Activated CD8-positive, alpha-beta T cell treated with anti-CD3 and anti-CD28 coated beads for 36 hours (primary cell): ENCODE measurements at regions of chr17 and their contacts with region 1.

Region 1: DNA sequence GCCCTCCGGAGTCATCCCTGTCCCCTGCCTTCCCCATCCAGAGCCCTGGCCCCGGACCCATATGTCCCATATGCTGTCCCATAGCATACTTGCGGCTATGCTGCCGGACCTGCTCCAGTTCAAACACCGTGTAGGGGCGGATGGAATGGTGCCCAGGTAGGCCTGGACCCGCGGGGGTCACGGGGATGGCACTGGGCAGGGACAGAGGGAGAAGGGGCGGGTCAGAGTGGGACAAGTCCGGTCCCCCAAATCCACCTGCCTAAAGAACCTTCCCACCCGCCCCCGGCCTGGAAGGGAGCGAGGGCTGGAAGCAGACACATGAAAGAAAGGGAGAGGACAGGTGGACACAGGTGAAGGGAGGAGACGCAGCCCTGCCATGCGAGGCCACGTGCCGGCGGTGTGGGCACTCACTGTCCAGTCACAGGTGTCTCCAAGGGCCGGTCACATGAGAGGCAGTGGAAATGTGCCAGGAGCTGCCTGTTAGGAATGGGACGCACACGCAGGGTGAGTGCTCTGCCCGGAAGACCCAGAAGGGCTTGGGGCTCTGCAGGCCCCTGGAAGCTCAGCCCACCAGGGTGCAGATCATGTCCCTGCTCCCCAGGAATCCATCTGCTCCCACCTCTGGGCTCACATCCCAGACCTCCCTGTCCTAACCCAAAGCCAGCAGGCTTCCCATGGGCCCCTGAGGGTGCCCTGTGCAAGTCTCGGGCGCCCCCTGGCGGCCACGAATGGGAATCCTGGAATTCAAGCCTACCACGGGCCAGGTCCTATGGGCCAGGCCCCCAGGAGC is 14.0 kb downstream of the UBALD2 start:
- DNase-seq: peak; percentile 90
- ATAC-seq: peak; percentile 85
- H3K4me3 Mint-ChIP-seq: no peak overlapping the region
- H3K27ac Mint-ChIP-seq: no peak overlapping the region
- H3K4me1 Mint-ChIP-seq: peaks cover 26% of the 10 kb centered on the region
- H3K27me3 Mint-ChIP-seq: no peaks in the 10 kb centered on the region
- CTCF ChIP-seq: peak; percentile 98

Region 2: DNA sequence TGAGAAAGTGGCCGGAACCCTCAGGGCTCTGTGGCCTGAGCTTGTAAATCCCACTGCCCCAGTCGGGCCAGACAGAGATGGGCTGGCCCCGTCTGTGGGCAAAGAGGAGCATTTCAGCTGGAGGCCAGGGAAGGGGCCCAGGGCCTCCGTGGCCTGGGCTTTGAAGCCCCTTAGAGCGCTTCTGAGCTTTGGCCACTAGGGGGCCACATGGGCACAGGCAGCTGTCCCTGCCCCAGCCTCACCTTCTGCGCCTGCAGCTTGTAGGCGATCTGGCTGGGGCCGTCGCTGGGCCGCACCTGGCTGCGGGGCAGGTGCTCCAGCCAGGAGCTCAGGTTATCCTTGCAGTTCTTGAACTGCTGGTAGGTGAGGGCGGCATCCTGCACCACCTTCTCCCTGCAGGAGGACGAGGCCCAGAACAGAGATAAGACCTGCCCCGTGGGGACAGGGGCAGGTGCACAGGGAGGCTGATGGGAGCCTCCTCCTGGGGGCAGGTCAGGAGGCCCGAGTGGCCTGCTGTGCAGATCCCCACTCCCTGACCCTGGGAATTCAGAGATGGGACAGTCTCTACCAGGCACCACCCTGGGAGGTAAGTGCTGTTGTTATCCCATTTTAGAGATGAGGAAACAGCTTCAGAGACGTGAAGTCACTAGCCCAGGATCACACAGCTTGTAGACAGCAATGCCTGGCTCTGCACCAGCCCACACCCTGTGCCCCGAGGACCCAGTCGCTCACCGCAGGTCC is 264.8 kb before region 1 on chr17:
- CTCF ChIA-PET with region 1: interaction called, 37 read pairs
- POLR2A ChIA-PET with region 1: no interaction called
- intact Hi-C with region 1: no loop called
- DNase-seq: peak; percentile 88
- ATAC-seq: peak; percentile 100
- H3K4me3 Mint-ChIP-seq: no peak overlapping the region
- H3K27ac Mint-ChIP-seq: peak overlapping the region; percentile 55
- H3K4me1 Mint-ChIP-seq: peaks cover 8% of the 10 kb centered on the region
- H3K27me3 Mint-ChIP-seq: no peaks in the 10 kb centered on the region
- CTCF ChIP-seq: peak; percentile 95

Region 3: DNA sequence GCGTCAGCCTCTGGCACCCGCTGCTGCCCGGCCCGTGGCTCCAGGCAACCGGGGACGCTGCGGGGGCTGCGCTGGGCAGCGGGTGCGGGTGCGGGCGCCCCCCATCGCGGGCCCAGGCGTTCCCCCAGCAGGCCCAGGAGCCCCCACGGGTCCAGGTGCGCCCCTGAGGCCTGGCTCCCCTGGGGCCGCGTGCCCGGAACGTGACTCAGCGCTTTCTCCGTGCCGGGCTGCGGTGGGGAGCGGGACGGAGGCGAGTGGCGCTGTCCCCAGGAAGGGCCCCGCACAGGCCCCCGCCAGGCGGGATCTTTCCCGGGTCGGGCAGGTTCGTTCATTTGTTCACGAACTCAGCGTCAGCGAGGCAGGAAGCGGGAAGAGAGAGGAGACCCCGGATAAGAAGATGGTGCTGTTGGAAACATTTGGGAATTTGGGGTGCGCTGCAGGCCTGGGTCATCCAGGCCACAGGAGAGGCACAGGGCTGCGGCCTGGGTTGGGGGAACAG is 157.2 kb before region 1 on chr17:
- CTCF ChIA-PET with region 1: interaction called, 236 read pairs
- POLR2A ChIA-PET with region 1: interaction called, 83 read pairs
- intact Hi-C with region 1: loop called (anchors 2 kb)
- DNase-seq: peak; percentile 40
- ATAC-seq: peak; percentile 10
- H3K4me3 Mint-ChIP-seq: peak overlapping the region; percentile 45
- H3K27ac Mint-ChIP-seq: peak overlapping the region; percentile 77
- H3K4me1 Mint-ChIP-seq: peaks cover 20% of the 10 kb centered on the region
- H3K27me3 Mint-ChIP-seq: no peaks in the 10 kb centered on the region
- CTCF ChIP-seq: no peak

Region 4: DNA sequence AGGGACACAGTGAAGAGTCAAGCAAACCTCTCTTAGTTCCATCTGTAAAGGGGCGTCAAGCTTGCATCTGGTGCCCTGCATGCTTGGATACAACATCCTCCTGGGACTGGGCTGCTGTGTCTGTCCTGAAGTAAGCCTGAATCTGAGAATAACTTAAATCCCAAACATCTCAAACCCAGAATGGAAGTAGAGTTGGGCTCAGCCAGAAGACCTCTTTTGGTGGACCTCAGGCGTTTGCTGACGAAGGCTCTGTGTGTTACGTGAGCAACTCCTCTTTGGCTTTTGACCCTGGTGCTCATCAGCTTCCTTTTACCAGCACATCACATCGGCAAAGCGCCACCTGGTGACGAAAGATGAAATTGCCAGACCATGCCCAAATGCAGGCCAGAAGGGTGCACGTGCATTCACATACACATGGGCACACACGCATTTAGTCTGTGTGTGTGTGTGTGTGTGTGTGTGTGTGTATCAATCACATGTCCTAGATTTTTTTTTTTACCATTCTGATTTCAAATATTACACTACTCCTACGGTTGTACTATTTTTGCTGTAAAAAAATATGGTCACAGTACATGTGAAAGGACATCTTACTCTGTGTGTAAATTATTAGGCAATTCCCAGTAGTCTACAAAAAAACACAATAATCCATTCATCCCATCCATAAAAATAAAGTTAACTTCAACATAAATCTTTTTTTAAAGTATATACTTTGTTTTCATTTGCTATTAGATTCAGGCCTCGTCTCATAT is 97.0 kb before region 1 on chr17:
- CTCF ChIA-PET with region 1: interaction called, 95 read pairs
- POLR2A ChIA-PET with region 1: interaction called, 700 read pairs
- intact Hi-C with region 1: no loop called
- DNase-seq: peak; percentile 99
- ATAC-seq: peak; percentile 80
- H3K4me3 Mint-ChIP-seq: peak overlapping the region; percentile 56
- H3K27ac Mint-ChIP-seq: peak overlapping the region; percentile 96
- H3K4me1 Mint-ChIP-seq: peaks cover 65% of the 10 kb centered on the region
- H3K27me3 Mint-ChIP-seq: no peaks in the 10 kb centered on the region
- CTCF ChIP-seq: peak; percentile 73

Region 5: DNA sequence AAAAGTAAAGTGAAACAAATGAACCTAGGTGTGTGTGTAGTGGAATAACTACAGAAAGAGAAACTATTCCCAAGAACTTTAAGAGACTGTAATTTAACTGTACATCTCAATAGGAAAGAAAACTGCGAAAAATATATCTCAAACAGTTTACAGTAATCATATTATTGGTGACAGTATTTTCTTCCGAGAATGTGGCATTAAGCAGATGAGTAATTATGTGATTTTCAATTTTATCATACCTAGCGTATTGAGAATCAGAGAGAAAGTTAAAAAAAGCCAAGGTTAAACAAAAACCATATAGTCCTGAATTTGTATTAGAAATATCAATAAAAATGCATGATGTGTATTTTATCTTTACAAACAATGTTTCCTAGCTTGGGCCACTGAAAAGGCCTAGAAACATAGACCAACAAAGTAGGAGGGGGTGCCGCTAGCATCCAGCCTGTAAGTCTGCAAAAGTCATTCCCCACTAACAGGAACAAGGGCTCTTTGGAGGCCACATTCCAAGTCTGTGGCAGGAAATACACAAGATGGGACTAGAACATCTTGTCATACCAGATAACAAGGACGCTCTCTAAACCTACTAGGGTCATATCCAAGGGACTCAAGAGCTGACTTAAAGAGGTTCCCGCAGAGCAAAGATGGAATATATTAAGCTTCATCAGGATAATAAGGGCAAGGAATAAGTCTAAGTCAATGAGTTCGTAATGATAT is 59.3 kb before region 1 on chr17:
- CTCF ChIA-PET with region 1: interaction called, 12 read pairs
- POLR2A ChIA-PET with region 1: interaction called, 4 read pairs
- intact Hi-C with region 1: no loop called
- DNase-seq: no peak
- ATAC-seq: no peak
- H3K4me3 Mint-ChIP-seq: no peak overlapping the region
- H3K27ac Mint-ChIP-seq: peak overlapping the region; percentile 49
- H3K4me1 Mint-ChIP-seq: peaks cover 42% of the 10 kb centered on the region
- H3K27me3 Mint-ChIP-seq: no peaks in the 10 kb centered on the region
- CTCF ChIP-seq: no peak

Region 6: GRCh38 chr17:76296186-76296585 is 17.0 kb after region 1 on chr17:
- CTCF ChIA-PET with region 1: interaction called, 17 read pairs
- POLR2A ChIA-PET with region 1: interaction called, 3 read pairs
- intact Hi-C with region 1: no loop called
- DNase-seq: no peak
- ATAC-seq: no peak
- H3K4me3 Mint-ChIP-seq: no peak overlapping the region
- H3K27ac Mint-ChIP-seq: no peak overlapping the region
- H3K4me1 Mint-ChIP-seq: no peaks in the 10 kb centered on the region
- H3K27me3 Mint-ChIP-seq: no peaks in the 10 kb centered on the region
- CTCF ChIP-seq: no peak